B cell (primary cell): ENCODE measurements at regions of chr19 and their contacts with region 1.

Region 1: DNA sequence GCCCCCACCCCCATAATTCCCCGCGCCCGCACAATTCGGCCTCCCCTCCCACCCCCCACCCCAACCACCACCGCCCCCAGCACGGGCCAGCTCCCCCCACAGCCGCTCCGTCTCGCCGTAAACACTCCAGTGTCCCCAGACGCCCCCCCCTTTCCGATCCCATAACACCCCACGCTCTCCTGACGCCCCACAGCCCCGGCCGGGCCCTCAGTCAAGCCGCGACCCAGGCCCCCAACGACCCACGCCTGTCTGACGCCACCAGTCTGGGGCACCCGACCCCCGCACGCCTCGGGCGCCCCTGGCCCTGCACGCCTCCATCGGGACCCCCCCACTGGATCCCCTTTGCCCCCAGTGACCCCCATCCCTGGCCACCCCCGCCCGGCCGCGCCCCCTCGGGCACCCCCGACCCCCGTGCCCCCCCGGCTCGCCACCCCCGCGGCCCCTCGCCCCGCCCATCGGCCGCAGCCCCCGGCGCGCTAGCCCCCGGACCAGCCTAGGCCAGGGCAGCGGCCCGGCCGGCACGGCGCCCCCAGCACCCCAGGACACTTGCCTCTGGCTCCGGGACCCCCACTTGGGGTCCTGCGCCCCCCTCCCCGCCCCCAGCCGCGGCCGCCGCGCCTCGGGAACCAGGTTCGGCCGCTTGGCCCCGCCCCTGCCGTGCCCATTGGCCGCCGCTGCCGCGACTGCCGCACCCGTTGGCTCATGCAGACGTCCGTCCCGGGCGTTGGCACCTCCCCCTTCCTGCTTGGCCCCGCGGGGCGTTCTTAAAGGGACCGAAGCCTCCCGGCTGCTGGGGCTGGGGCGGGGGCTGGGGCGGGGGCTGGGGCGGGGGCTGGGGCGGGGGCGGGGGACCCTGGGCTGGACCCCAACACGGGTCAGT is at the start of gene FKBP8:
- DNase-seq: peak; percentile 92
- ATAC-seq: peak; percentile 98
- H3K4me3 ChIP-seq: peak within 1 kb of the TSS; percentile 51 to 76 (median 68)
- H3K4me3 Mint-ChIP-seq: peak within 1 kb of the TSS; percentile 96
- H3K27ac ChIP-seq: peak within 1 kb of the TSS; percentile 54 to 64
- H3K27ac Mint-ChIP-seq: peak within 1 kb of the TSS; percentile 96
- H3K4me1 ChIP-seq: peaks cover 14 to 20% of the 10 kb centered on the region in 2 donors
- H3K4me1 Mint-ChIP-seq: peaks cover 20% of the 10 kb centered on the region
- H3K27me3 ChIP-seq: no peaks in the 10 kb centered on the region
- H3K27me3 Mint-ChIP-seq: no peaks in the 10 kb centered on the region
- CTCF ChIP-seq: no peak
- total RNA-seq, gene FKBP8: 148 and 150 TPM in 2 replicates

Region 2: GRCh38 chr19:18557474-18558201 is 14.5 kb after region 1 on chr19 and contains the start of gene KXD1:
- CTCF ChIA-PET with region 1: interaction called, 11 read pairs
- POLR2A ChIA-PET with region 1: interaction called, 32 read pairs
- intact Hi-C with region 1: loop called (anchors 1 kb)
- DNase-seq: peak; percentile 99
- ATAC-seq: peak; percentile 99
- H3K4me3 ChIP-seq: peak within 1 kb of the TSS; percentile 73 to 98 (median 93)
- H3K4me3 Mint-ChIP-seq: peak within 1 kb of the TSS; percentile 90
- H3K27ac ChIP-seq: peak within 1 kb of the TSS; percentile 82 to 97
- H3K27ac Mint-ChIP-seq: peak within 1 kb of the TSS; percentile 90
- H3K4me1 ChIP-seq: peaks cover 15 to 25% of the 10 kb centered on the region in 2 donors
- H3K4me1 Mint-ChIP-seq: peaks cover 21% of the 10 kb centered on the region
- H3K27me3 ChIP-seq: no peaks in the 10 kb centered on the region
- H3K27me3 Mint-ChIP-seq: no peaks in the 10 kb centered on the region
- CTCF ChIP-seq: no peak
- total RNA-seq, gene KXD1: 88.5 and 90.0 TPM in 2 replicates

Region 3: DNA sequence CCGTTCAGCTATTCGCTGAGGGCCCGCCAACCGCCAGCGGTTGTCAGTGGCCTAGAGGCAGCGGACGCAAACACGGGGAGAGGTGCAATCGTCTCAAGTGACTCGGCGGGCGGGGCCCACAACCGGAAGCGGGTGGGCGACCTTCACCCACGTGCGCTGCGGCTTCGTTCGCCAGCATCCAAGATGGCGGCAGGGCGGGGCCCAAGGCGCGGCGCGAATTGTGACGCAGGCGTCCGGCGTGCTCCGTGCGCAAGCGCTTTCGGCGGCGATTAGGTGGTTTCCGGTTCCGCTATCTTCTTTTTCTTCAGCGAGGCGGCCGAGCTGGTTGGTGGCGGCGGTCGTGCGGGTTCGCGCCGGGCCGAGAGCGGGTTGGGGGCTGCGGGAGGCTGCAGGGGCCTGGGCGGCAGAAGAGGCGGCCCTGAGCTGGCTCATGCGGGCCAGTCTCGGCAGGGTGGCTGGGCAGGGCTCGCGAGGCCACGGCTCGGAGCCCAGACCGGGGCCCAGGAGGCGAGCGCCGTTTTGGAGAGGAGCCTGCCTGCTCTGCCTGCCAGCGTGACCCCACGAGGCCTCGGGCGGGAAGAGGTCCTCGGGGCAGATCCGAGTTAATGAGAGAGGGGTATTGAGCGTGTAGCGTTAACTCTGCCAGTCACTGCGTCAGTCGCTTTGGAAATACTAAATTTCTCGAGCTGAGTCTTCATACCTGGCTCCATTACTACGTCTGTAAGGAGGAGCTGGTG is 28.6 kb after region 1 on chr19 and contains the start of gene UBA52:
- CTCF ChIA-PET with region 1: interaction called, 3 read pairs
- POLR2A ChIA-PET with region 1: interaction called, 5 read pairs
- intact Hi-C with region 1: loop called (anchors 1 kb)
- DNase-seq: peak; percentile 99
- ATAC-seq: peak; percentile 93
- H3K4me3 ChIP-seq: peak within 1 kb of the TSS; percentile 69 to 94 (median 86)
- H3K4me3 Mint-ChIP-seq: peak within 1 kb of the TSS; percentile 94
- H3K27ac ChIP-seq: peak within 1 kb of the TSS; percentile 85 to 95
- H3K27ac Mint-ChIP-seq: peak within 1 kb of the TSS; percentile 90
- H3K4me1 ChIP-seq: peaks cover 12 to 25% of the 10 kb centered on the region in 2 donors
- H3K4me1 Mint-ChIP-seq: peaks cover 16% of the 10 kb centered on the region
- H3K27me3 ChIP-seq: no peaks in the 10 kb centered on the region
- H3K27me3 Mint-ChIP-seq: no peaks in the 10 kb centered on the region
- CTCF ChIP-seq: no peak
- total RNA-seq, gene UBA52: 1,690 and 1,837 TPM in 2 replicates

Region 4: DNA sequence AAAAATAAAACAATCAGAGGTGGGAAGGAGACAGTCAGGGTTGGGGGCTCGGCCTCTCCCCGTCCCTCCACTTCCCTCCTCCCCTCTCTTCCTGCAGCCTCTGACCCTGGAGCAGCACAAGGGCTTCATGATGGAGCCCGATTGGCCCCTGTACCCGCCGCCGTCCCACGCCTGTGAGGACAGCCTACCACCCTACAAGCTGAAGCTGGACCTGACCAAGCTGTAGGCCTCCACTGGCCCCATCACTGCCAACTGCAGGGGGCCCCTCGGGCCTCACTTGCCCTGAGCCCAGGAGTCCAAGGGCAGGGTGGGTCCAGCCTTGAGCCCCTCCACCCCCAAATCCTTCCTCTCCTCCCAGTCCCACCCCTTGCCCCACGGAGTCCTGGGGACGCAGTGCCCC is 77.1 kb after region 1 on chr19:
- CTCF ChIA-PET with region 1: no interaction called
- POLR2A ChIA-PET with region 1: interaction called, 10 read pairs
- intact Hi-C with region 1: no loop called
- DNase-seq: no peak
- ATAC-seq: no peak
- H3K4me3 ChIP-seq: no peak overlapping the region
- H3K4me3 Mint-ChIP-seq: no peak overlapping the region
- H3K27ac ChIP-seq: no peak overlapping the region
- H3K27ac Mint-ChIP-seq: no peak overlapping the region
- H3K4me1 ChIP-seq: no peaks in the 10 kb centered on the region
- H3K4me1 Mint-ChIP-seq: peaks cover 2% of the 10 kb centered on the region
- H3K27me3 ChIP-seq: peaks cover 0 to 37% (median 6%) of the 10 kb centered on the region in 4 experiments
- H3K27me3 Mint-ChIP-seq: peaks cover 18% of the 10 kb centered on the region
- CTCF ChIP-seq: no peak